CD8-positive, alpha-beta T cell (primary cell): ENCODE measurements at regions of chr22 and their contacts with region 1.

Region 1: GRCh38 chr22:22884010-22884887 is 3.4 kb upstream of the IGLL5 start:
- DNase-seq: peak; percentile 46 to 86 (median 67)
- ATAC-seq: peak; percentile 78
- H3K4me3 ChIP-seq: no peak overlapping the region
- H3K4me3 Mint-ChIP-seq: no peak overlapping the region
- H3K27ac ChIP-seq: no peak overlapping the region
- H3K27ac Mint-ChIP-seq: no peak overlapping the region
- H3K4me1 ChIP-seq: no peaks in the 10 kb centered on the region
- H3K4me1 Mint-ChIP-seq: no peaks in the 10 kb centered on the region
- H3K27me3 ChIP-seq: no peaks in the 10 kb centered on the region
- H3K27me3 Mint-ChIP-seq: no peaks in the 10 kb centered on the region
- CTCF ChIP-seq: peak; percentile 93

Region 2: DNA sequence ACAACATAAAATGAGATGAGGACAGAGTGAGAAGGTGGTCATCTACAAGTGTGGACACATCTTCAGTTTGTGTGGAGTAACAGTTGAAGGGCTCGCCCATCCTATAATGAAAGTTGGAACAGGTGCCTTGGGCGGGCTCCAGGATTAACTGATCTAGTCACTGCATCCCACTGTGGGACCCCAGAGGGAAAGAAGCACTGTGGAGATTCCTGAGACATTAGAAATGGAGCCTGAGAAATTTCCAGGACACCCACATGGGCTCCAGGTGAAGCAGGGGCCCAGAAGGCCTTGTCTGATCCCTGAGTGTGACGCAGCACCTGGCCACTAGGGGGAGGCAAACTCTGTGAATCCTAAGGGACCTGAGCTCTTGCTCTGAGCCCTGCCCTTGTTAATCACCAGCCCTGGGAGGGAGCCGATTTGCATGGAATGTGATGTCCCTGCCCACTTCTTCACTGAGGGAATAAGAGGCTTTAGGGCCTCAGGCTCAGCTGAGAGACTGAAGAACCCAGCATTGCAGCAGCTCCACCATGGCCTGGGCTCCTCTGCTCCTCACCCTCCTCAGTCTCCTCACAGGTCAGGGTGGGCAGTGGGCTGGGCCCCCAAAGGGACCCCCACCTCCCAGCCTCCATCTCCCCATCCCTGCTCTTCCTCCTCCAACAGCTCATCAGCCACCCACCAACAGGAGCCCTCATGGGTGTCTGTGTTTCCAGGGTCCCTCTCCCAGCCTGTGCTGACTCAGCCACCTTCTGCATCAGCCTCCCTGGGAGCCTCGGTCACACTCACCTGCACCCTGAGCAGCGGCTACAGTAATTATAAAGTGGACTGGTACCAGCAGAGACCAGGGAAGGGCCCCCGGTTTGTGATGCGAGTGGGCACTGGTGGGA is 541.3 kb before region 1 on chr22:
- CTCF ChIA-PET with region 1: no interaction called
- POLR2A ChIA-PET with region 1: no interaction called
- intact Hi-C with region 1: no loop called
- DNase-seq: peak; percentile 37 to 78 (median 60)
- ATAC-seq: peak; percentile 61
- H3K4me3 ChIP-seq: no peak overlapping the region
- H3K4me3 Mint-ChIP-seq: no peak overlapping the region
- H3K27ac ChIP-seq: no peak overlapping the region
- H3K27ac Mint-ChIP-seq: no peak overlapping the region
- H3K4me1 ChIP-seq: no peaks in the 10 kb centered on the region
- H3K4me1 Mint-ChIP-seq: no peaks in the 10 kb centered on the region
- H3K27me3 ChIP-seq: no peaks in the 10 kb centered on the region
- H3K27me3 Mint-ChIP-seq: no peaks in the 10 kb centered on the region
- CTCF ChIP-seq: peak; percentile 81

Region 3: DNA sequence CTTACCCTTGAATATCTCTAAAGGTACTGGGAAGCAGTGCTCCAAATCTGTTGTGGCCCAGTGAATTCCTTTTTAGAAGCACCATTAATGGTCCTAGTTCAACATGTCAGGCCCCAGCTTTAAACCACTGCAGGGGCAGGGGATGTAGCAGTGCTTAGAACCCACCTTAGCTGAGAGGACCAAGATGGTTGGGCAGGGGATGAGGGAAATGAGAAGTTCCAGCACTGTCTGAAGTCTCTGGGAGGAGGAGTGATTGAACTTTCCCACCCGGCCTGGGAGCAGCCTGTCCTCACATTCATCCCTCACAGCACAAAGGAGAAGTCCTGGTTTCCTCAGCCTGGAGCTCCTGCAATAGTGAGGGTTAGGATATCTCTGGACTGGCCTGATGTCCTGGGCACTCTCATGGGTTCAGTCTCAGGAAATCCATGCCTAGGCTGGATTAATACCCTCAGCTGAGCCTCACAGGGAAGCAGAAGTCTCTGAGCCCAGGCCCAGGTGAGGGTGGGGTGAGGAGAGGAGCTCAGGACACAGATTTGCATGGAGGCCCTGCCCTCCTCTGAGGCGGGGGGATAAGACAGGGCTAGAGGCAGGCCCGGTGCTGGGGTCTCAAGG is 296.6 kb before region 1 on chr22:
- CTCF ChIA-PET with region 1: interaction called, 19 read pairs
- POLR2A ChIA-PET with region 1: no interaction called
- intact Hi-C with region 1: loop called in 1 of 2 experiments (anchors 2 kb)
- DNase-seq: no peak
- ATAC-seq: no peak
- H3K4me3 ChIP-seq: no peak overlapping the region
- H3K4me3 Mint-ChIP-seq: no peak overlapping the region
- H3K27ac ChIP-seq: no peak overlapping the region
- H3K27ac Mint-ChIP-seq: no peak overlapping the region
- H3K4me1 ChIP-seq: no peaks in the 10 kb centered on the region
- H3K4me1 Mint-ChIP-seq: no peaks in the 10 kb centered on the region
- H3K27me3 ChIP-seq: no peaks in the 10 kb centered on the region
- H3K27me3 Mint-ChIP-seq: peaks cover 23% of the 10 kb centered on the region
- CTCF ChIP-seq: no peak

Region 4: GRCh38 chr22:22687638-22688500 is 196.4 kb before region 1 on chr22:
- CTCF ChIA-PET with region 1: interaction called, 50 read pairs
- POLR2A ChIA-PET with region 1: no interaction called
- intact Hi-C with region 1: loop called (anchors 1 to 5 kb)
- DNase-seq: peak in 3 of 9 experiments; percentile 16 to 54 (median 45)
- ATAC-seq: no peak
- H3K4me3 ChIP-seq: no peak overlapping the region
- H3K4me3 Mint-ChIP-seq: no peak overlapping the region
- H3K27ac ChIP-seq: no peak overlapping the region
- H3K27ac Mint-ChIP-seq: no peak overlapping the region
- H3K4me1 ChIP-seq: no peaks in the 10 kb centered on the region
- H3K4me1 Mint-ChIP-seq: no peaks in the 10 kb centered on the region
- H3K27me3 ChIP-seq: no peaks in the 10 kb centered on the region
- H3K27me3 Mint-ChIP-seq: no peaks in the 10 kb centered on the region
- CTCF ChIP-seq: peak; percentile 31

Region 5: GRCh38 chr22:22710719-22711531 is 173.3 kb before region 1 on chr22:
- CTCF ChIA-PET with region 1: interaction called, 137 read pairs
- POLR2A ChIA-PET with region 1: no interaction called
- intact Hi-C with region 1: loop called (anchors 1 kb)
- DNase-seq: peak; percentile 61 to 90 (median 79)
- ATAC-seq: peak; percentile 70
- H3K4me3 ChIP-seq: no peak overlapping the region
- H3K4me3 Mint-ChIP-seq: no peak overlapping the region
- H3K27ac ChIP-seq: no peak overlapping the region
- H3K27ac Mint-ChIP-seq: no peak overlapping the region
- H3K4me1 ChIP-seq: no peaks in the 10 kb centered on the region
- H3K4me1 Mint-ChIP-seq: no peaks in the 10 kb centered on the region
- H3K27me3 ChIP-seq: no peaks in the 10 kb centered on the region
- H3K27me3 Mint-ChIP-seq: no peaks in the 10 kb centered on the region
- CTCF ChIP-seq: peak; percentile 87

Region 6: GRCh38 chr22:22753526-22754267 is 130.6 kb before region 1 on chr22:
- CTCF ChIA-PET with region 1: interaction called, 279 read pairs
- POLR2A ChIA-PET with region 1: interaction called, 9 read pairs
- intact Hi-C with region 1: loop called in 1 of 2 experiments (anchors 1 kb)
- DNase-seq: peak; percentile 63 to 90 (median 83)
- ATAC-seq: peak; percentile 85
- H3K4me3 ChIP-seq: peak overlapping the region in 1 of 2 experiments; percentile 25
- H3K4me3 Mint-ChIP-seq: peak overlapping the region; percentile 60
- H3K27ac ChIP-seq: peak overlapping the region; percentile 44 to 69
- H3K27ac Mint-ChIP-seq: peak overlapping the region; percentile 94
- H3K4me1 ChIP-seq: peaks cover 44% of the 10 kb centered on the region
- H3K4me1 Mint-ChIP-seq: peaks cover 66% of the 10 kb centered on the region
- H3K27me3 ChIP-seq: no peaks in the 10 kb centered on the region
- H3K27me3 Mint-ChIP-seq: no peaks in the 10 kb centered on the region
- CTCF ChIP-seq: peak; percentile 70

Region 7: DNA sequence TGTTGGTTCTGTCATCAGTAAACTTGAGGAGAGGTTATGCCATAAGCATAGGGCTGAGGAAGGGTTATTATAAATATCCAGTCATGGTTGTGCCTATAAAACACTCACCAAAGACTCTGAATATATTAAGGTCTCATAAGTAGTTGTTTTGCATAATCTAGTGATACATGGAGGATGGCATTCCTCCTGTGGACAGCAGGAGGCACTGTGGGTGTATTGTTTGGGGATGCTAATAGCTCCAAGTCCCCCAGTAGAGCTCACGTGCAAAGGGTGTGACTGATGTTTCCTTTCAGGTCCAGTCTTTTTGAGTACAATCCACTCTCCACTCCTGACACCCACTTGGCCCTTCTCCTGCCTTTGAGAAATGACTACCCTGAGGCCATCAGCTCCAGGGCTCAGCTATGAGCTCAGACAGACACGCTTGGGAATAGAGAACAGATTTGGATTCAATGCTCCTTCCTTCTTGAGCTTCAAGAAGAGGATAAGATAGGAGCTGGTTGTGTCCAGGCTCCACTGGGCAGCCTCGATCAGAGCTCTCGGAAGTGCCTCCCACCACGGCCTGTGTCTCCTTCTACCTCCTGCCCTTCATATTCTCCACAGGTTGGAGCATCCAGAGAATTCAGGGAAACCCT is 81.8 kb before region 1 on chr22:
- CTCF ChIA-PET with region 1: interaction called, 281 read pairs
- POLR2A ChIA-PET with region 1: interaction called, 7 read pairs
- intact Hi-C with region 1: loop called in 1 of 2 experiments (anchors 2 kb)
- DNase-seq: peak in 8 of 9 experiments; percentile 37 to 77 (median 58)
- ATAC-seq: peak; percentile 86
- H3K4me3 ChIP-seq: no peak overlapping the region
- H3K4me3 Mint-ChIP-seq: no peak overlapping the region
- H3K27ac ChIP-seq: no peak overlapping the region
- H3K27ac Mint-ChIP-seq: peak overlapping the region; percentile 18
- H3K4me1 ChIP-seq: no peaks in the 10 kb centered on the region
- H3K4me1 Mint-ChIP-seq: peaks cover 48% of the 10 kb centered on the region
- H3K27me3 ChIP-seq: no peaks in the 10 kb centered on the region
- H3K27me3 Mint-ChIP-seq: no peaks in the 10 kb centered on the region
- CTCF ChIP-seq: peak; percentile 80

Region 8: GRCh38 chr22:22855617-22856308 is 28.5 kb before region 1 on chr22:
- CTCF ChIA-PET with region 1: interaction called, 26 read pairs
- POLR2A ChIA-PET with region 1: no interaction called
- intact Hi-C with region 1: no loop called
- DNase-seq: peak in 8 of 9 experiments; percentile 19 to 69 (median 40)
- ATAC-seq: peak; percentile 49
- H3K4me3 ChIP-seq: no peak overlapping the region
- H3K4me3 Mint-ChIP-seq: no peak overlapping the region
- H3K27ac ChIP-seq: no peak overlapping the region
- H3K27ac Mint-ChIP-seq: no peak overlapping the region
- H3K4me1 ChIP-seq: no peaks in the 10 kb centered on the region
- H3K4me1 Mint-ChIP-seq: peaks cover 1% of the 10 kb centered on the region
- H3K27me3 ChIP-seq: no peaks in the 10 kb centered on the region
- H3K27me3 Mint-ChIP-seq: no peaks in the 10 kb centered on the region
- CTCF ChIP-seq: peak; percentile 35

Region 9: GRCh38 chr22:23163665-23164064 is 279.4 kb after region 1 on chr22:
- CTCF ChIA-PET with region 1: no interaction called
- POLR2A ChIA-PET with region 1: no interaction called
- intact Hi-C with region 1: no loop called
- DNase-seq: no peak
- ATAC-seq: no peak
- H3K4me3 ChIP-seq: no peak overlapping the region
- H3K4me3 Mint-ChIP-seq: no peak overlapping the region
- H3K27ac ChIP-seq: no peak overlapping the region
- H3K27ac Mint-ChIP-seq: no peak overlapping the region
- H3K4me1 ChIP-seq: no peaks in the 10 kb centered on the region
- H3K4me1 Mint-ChIP-seq: no peaks in the 10 kb centered on the region
- H3K27me3 ChIP-seq: no peaks in the 10 kb centered on the region
- H3K27me3 Mint-ChIP-seq: no peaks in the 10 kb centered on the region
- CTCF ChIP-seq: no peak